Breast epithelium (tissue), 4 donors: ENCODE measurements at regions of chr14 and their contacts with region 1.

Region 1: GRCh38 chr14:95830386-95830785 is 46.2 kb upstream of the TUNAR start:
- DNase-seq: no peak
- H3K4me3 ChIP-seq: no peak overlapping the region
- H3K27ac ChIP-seq: no peak overlapping the region
- H3K4me1 ChIP-seq: no peaks in the 10 kb centered on the region
- H3K27me3 ChIP-seq: peaks cover 0 to 49% of the 10 kb centered on the region in 2 donors
- CTCF ChIP-seq: no peak
- POLR2A ChIP-seq: no peak

Region 2: GRCh38 chr14:95895720-95896119 is 65.3 kb after region 1 on chr14:
- intact Hi-C with region 1: loop called (anchors 2 kb)
- DNase-seq: no peak
- H3K4me3 ChIP-seq: no peak overlapping the region
- H3K27ac ChIP-seq: no peak overlapping the region
- H3K4me1 ChIP-seq: no peaks in the 10 kb centered on the region
- H3K27me3 ChIP-seq: peaks cover 0 to 56% of the 10 kb centered on the region in 2 donors
- CTCF ChIP-seq: no peak
- POLR2A ChIP-seq: no peak